Dendritic cell treated with granulocyte-macrophage colony-stimulating factor and Interleukin-4, amounts not matched to agents 40 ng/mL and 50 ng/mL, for 4 days (primary cell): ENCODE measurements at regions of chr6 and their contacts with region 1.

Region 1: DNA sequence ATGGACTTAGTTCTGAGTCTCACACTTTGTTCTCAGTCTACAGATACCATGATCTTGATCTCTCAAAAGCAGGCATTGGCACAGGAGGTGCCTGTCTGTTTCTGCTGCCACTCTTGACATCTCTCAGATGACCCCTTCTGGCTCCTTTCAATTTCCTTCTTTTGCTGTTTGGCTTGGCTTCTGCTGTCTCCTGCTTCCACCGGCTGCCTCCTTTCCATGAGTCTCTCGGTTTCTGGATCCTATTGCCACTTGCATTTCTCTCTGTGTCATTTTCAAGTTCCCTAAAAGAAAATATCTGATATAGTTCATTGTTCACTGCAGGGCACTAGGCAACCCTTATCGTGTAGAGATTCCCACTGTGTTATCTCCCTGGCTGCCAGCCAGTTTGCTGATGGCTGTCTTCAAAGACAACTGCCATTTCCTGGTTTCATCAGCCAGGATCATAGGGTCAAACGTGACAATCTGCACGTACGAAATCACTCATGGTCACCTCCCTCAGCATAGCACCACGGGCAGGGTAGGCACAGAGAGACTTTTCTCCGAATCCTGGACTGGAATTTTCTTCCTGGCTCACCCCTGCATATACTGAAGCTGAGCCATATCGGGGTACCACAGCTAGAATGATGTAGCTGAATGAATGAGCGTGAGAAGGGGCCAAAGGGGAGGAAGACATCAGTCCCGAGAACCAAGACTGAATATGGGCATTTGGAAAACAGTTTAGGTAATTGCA is 144.6 kb upstream of the TMEM170B start:
- H3K4me3 Mint-ChIP-seq: no peak overlapping the region
- H3K27ac Mint-ChIP-seq: peak overlapping the region; percentile 62
- H3K4me1 Mint-ChIP-seq: peaks cover 33% of the 10 kb centered on the region
- H3K27me3 Mint-ChIP-seq: peaks cover 9% of the 10 kb centered on the region

Region 2: GRCh38 chr6:11460001-11460668 is 67.2 kb after region 1 on chr6:
- intact Hi-C with region 1: loop called (anchors 5 kb)
- H3K4me3 Mint-ChIP-seq: no peak overlapping the region
- H3K27ac Mint-ChIP-seq: no peak overlapping the region
- H3K4me1 Mint-ChIP-seq: peaks cover 54% of the 10 kb centered on the region
- H3K27me3 Mint-ChIP-seq: peaks cover 18% of the 10 kb centered on the region